ENCODE measurements at regions of chr17 and their contacts with region 1.

Region 1: GRCh38 chr17:48804925-48805411 is 12.1 kb downstream of the TTLL6 start:
- DNase-seq: peak; percentile 21
- H3K4me3 ChIP-seq: no peak overlapping the region
- H3K27ac ChIP-seq: no peak overlapping the region
- H3K4me1 ChIP-seq: no peaks in the 10 kb centered on the region
- H3K27me3 ChIP-seq: no peaks in the 10 kb centered on the region
- CTCF ChIP-seq: peak; percentile 73 to 96

Region 2: GRCh38 chr17:48753794-48754499 is 51.0 kb before region 1 on chr17:
- CTCF ChIA-PET with region 1: no interaction called
- dilution Hi-C with region 1: loop called (anchors 5 kb)
- in situ Hi-C with region 1: no loop called
- intact Hi-C with region 1: no loop called
- DNase-seq: no peak
- H3K4me3 ChIP-seq: no peak overlapping the region
- H3K27ac ChIP-seq: no peak overlapping the region
- H3K4me1 ChIP-seq: peaks cover 5% of the 10 kb centered on the region
- H3K27me3 ChIP-seq: peaks cover 66% of the 10 kb centered on the region
- CTCF ChIP-seq: no peak